ENCODE measurements at regions of chr12 and their contacts with region 1.

Region 1: DNA sequence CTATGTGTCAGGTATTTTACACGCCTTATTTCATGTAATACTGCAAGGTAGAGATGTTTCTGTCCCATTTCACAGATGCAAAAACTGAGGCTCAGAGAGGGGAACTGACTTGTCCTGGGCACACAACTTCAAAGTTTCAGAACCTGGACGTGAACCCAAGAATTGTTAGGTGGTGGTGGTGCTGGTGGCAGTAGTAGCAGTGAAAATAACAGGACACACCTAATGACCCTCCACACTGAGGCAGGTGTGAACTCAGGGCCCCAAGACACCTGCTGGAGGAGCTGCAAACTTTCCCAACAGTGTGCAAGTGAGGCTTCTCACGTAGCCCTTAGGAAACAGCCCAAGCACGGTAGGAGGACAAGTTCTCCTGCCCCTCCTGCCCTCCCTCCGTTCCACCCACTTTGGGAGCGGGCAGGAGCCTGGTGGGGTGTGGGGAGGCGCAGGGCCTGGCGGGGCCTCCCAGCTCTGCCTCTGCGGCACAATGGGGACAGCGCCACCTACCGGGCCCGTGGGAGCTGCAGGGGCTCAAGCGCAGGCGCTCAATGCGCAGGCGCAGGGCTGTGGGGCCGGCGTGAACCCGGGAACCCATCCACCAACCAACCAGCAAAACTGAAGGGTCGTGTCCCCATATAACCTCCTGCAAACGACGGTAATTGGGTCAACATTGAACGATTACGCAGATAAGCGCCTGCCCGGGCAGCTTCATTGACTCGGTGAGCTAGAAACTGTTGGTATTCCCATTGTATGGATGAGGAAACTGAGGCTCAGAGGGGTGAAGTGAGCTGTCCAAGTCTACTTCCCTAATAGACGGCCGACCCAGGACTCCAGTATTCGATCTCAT is 12.0 kb upstream of the TRPV4 start:
- DNase-seq: peak; percentile 79
- H3K4me3 ChIP-seq: peak overlapping the region in 1 of 3 experiments; percentile 35
- H3K27ac ChIP-seq: no peak overlapping the region
- H3K4me1 ChIP-seq: peaks cover 5% of the 10 kb centered on the region
- H3K27me3 ChIP-seq: no peaks in the 10 kb centered on the region
- CTCF ChIP-seq: peak; percentile 99 to 100
- POLR2A ChIP-seq: no peak

Region 2: DNA sequence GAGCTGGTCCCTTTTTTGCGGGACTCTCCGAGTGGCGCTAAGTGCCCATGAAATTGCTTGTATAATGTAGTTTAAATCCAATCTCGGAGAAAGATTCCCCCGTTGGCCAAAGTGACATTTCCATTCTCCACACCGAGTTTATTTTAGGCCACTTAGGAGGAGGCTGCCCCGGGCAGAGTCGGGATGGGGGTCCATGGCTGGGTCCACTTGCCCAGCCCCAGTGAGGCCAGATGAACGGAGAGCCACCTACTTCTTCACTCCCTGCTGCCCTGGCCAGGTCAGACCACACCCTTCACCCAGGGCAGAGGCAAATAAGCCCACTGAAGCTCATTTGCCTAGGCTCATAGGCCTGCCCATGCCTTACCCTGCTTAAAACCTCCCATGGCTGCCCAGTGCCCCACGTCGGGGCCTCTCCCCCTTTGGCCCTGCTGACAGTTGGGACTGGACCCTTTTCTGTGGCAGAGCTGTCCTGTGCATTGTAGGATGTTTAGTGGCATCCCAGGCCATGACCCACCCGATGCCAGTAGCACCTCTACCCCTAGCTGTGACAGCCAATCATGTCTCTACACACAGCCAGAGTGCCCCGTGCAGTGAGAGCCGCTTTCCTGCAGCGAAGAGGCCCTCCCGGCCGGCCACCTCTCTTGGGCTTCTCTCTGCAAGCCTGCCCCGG is 80.3 kb before region 1 on chr12:
- CTCF ChIA-PET with region 1: no interaction called
- POLR2A ChIA-PET with region 1: no interaction called
- dilution Hi-C with region 1: no loop called
- intact Hi-C with region 1: no loop called
- DNase-seq: no peak
- H3K4me3 ChIP-seq: no peak overlapping the region
- H3K27ac ChIP-seq: no peak overlapping the region
- H3K4me1 ChIP-seq: no peaks in the 10 kb centered on the region
- H3K27me3 ChIP-seq: no peaks in the 10 kb centered on the region
- CTCF ChIP-seq: no peak
- POLR2A ChIP-seq: no peak

Region 3: GRCh38 chr12:109775172-109775881 is 69.9 kb before region 1 on chr12:
- CTCF ChIA-PET with region 1: interaction called, 11 read pairs
- POLR2A ChIA-PET with region 1: no interaction called
- dilution Hi-C with region 1: no loop called
- intact Hi-C with region 1: no loop called
- DNase-seq: peak; percentile 62
- H3K4me3 ChIP-seq: no peak overlapping the region
- H3K27ac ChIP-seq: no peak overlapping the region
- H3K4me1 ChIP-seq: no peaks in the 10 kb centered on the region
- H3K27me3 ChIP-seq: no peaks in the 10 kb centered on the region
- CTCF ChIP-seq: peak; percentile 91
- POLR2A ChIP-seq: no peak

Region 4: GRCh38 chr12:109818905-109819500 is 26.2 kb before region 1 on chr12:
- CTCF ChIA-PET with region 1: interaction called, 13 read pairs
- POLR2A ChIA-PET with region 1: no interaction called
- dilution Hi-C with region 1: no loop called
- intact Hi-C with region 1: no loop called
- DNase-seq: no peak
- H3K4me3 ChIP-seq: no peak overlapping the region
- H3K27ac ChIP-seq: no peak overlapping the region
- H3K4me1 ChIP-seq: no peaks in the 10 kb centered on the region
- H3K27me3 ChIP-seq: no peaks in the 10 kb centered on the region
- CTCF ChIP-seq: no peak
- POLR2A ChIP-seq: no peak

Region 5: DNA sequence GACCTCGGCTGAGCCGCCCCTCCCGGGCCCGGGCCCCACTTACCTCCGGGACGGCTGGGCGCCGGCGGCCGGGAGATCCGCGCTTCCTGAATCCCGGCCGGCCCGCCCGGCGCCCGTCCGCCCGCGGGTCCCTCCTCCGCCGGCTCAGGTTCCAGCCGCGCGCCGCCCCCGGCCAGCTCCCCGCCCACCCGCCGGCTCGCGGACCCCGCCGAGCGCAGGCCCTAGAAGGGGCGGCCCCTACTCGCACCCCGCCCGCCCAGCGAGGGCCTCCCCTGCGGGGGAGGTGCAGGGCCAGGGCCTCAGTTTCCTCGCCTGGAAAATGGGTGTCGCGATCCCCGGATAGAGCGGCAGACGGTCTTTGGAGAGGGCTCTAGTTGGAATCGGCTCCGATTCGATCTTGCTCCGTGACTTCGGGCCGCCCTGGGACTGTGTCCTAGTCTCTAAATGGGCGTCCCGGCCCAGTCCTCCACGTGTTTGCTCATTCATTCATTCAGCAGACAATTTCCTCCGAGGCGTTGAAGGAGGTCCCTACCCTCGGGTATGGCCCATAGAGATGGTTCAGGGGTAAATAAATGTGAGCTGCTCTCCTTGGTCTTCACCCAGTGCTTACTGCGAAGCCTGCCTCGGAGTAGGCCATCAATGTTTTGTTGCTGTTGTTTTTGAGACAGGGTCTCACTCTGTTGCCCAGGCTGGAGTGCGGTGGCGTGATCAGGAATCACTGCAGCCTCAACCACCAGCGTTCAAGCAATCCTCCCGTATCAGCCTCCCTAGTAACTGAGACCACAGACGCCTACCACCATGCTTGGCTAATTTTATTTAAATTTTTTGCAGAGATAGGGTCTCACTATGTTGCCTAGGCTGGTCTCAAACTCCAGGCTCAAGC is 11.7 kb before region 1 on chr12 and contains the start of gene TRPV4:
- CTCF ChIA-PET with region 1: interaction called, 52 read pairs
- POLR2A ChIA-PET with region 1: no interaction called
- dilution Hi-C with region 1: no loop called
- intact Hi-C with region 1: no loop called
- DNase-seq: peak; percentile 64
- H3K4me3 ChIP-seq: peak within 1 kb of the TSS; percentile 50 to 63 (median 58)
- H3K27ac ChIP-seq: peak within 1 kb of the TSS; percentile 27
- H3K4me1 ChIP-seq: peaks cover 24% of the 10 kb centered on the region
- H3K27me3 ChIP-seq: no peaks in the 10 kb centered on the region
- CTCF ChIP-seq: no peak
- POLR2A ChIP-seq: peak; percentile 70
- total RNA-seq, gene TRPV4: 8.8 and 12.3 TPM in 2 replicates

Measured in endothelial cell of umbilical vein (primary cell).